ENCODE measurements at regions of chr22 and their contacts with region 1.

Region 1: GRCh38 chr22:39434243-39434653 is 22.6 kb upstream of the MGAT3 start:
- DNase-seq: no peak
- ATAC-seq: no peak
- H3K4me3 Mint-ChIP-seq: no peak overlapping the region
- H3K27ac Mint-ChIP-seq: no peak overlapping the region
- H3K4me1 Mint-ChIP-seq: peaks cover 22% of the 10 kb centered on the region
- H3K27me3 Mint-ChIP-seq: no peaks in the 10 kb centered on the region
- CTCF ChIP-seq: no peak

Region 2: DNA sequence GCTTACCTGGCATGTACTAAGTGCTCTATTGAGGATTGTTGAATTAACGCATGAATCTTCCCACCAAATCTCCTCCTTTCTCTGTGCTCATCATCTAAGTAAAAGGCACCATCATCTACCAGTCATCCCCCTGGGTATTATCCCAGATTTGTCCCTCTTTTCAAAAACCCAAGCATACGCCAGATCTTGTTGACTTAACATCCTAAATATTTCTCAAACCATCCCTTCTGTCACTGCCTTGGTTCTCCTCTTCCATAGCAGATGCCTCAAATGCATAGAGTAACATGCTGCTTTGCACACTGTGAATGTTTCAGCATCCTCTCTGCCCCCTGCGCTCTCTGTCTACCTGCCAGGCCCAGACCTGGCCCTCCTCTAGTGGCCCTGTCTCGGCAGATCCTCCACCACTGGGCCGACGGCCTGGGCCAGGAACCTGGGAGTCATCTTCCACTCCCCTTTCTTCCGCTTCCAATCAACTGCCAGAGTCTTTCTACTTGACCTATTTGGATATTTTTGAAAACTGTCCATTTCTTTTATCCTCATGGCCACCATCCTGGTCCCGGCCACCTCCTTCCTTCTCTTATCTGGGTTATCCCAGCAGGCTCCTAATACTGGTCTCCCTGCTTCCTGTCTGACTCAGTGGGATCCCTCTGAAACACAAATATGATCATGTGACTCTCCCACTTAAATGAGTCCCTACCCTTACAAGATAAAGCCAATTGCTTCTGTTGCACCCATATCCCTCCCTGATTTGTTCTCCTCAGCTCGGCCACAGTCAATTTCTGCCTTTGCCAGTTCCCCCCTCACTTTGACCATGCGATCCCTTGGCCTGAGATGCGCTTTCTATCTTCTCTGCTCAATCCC is 38.1 kb before region 1 on chr22:
- CTCF ChIA-PET with region 1: interaction called, 33 read pairs
- POLR2A ChIA-PET with region 1: no interaction called
- DNase-seq: no peak
- ATAC-seq: no peak
- H3K4me3 Mint-ChIP-seq: no peak overlapping the region
- H3K27ac Mint-ChIP-seq: no peak overlapping the region
- H3K4me1 Mint-ChIP-seq: peaks cover 7% of the 10 kb centered on the region
- H3K27me3 Mint-ChIP-seq: peaks cover 2% of the 10 kb centered on the region; the same call in 1 of the 2 replicates
- CTCF ChIP-seq: no peak

Region 3: DNA sequence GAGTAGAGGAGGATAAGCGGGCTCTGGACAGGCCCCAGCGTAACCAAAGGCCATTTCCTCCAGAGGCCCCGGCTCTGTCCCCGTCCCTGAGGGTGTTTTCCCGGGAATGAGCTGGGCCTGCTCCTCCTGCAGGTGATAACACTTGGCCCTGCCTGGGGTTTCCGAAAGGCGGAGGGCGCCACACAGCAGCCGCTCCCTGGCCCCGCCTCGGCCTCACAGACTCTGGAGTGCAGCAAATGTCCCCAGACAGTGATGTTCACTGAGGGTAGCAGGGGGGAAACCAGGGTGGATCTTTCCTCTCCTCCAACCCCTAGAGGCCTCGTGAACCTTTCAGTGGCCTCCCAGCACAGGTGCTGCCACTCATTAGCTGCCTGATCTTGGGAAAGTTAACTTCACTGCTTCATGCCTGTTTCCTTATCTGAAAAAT is 12.1 kb after region 1 on chr22:
- CTCF ChIA-PET with region 1: interaction called, 21 read pairs
- POLR2A ChIA-PET with region 1: no interaction called
- DNase-seq: peak; percentile 64
- ATAC-seq: peak; percentile 86
- H3K4me3 Mint-ChIP-seq: no peak overlapping the region
- H3K27ac Mint-ChIP-seq: no peak overlapping the region; the same call in 1 of the 2 replicates
- H3K4me1 Mint-ChIP-seq: peaks cover 24% of the 10 kb centered on the region
- H3K27me3 Mint-ChIP-seq: peaks cover 3% of the 10 kb centered on the region
- CTCF ChIP-seq: no peak

Region 4: DNA sequence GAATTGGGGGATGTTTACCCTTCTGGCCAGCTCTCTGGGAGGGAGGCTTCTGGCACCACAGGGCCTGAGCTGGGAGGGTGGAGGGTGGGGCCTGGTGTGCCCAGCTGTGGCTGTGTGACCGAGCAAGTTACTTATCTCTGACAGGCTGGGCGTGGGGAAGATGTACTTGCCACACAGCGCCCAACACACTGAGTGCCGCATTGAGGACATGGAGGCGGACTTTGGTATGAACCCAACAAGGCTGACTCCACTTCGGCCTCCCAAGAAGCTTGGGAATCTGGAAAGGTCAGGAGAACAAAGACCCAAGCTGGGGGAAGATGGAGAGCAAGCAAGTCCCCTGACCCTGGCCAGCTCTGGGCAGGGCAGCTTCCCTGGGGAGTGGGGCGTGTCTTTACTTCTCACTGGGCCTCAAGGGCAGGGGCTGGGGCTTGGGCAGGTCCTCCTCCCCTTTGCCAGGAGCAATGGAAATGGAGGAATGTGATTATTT is 20.2 kb after region 1 on chr22:
- CTCF ChIA-PET with region 1: interaction called, 21 read pairs
- POLR2A ChIA-PET with region 1: no interaction called
- DNase-seq: no peak
- ATAC-seq: peak; percentile 16
- H3K4me3 Mint-ChIP-seq: peak overlapping the region; percentile 17; the same call in 1 of the 2 replicates
- H3K27ac Mint-ChIP-seq: no peak overlapping the region; the same call in 1 of the 2 replicates
- H3K4me1 Mint-ChIP-seq: peaks cover 39% of the 10 kb centered on the region
- H3K27me3 Mint-ChIP-seq: peaks cover 47% of the 10 kb centered on the region
- CTCF ChIP-seq: no peak

Region 5: GRCh38 chr22:39471381-39472141 is 37.3 kb after region 1 on chr22:
- CTCF ChIA-PET with region 1: interaction called, 10 read pairs
- POLR2A ChIA-PET with region 1: no interaction called
- DNase-seq: no peak
- ATAC-seq: peak; percentile 14
- H3K4me3 Mint-ChIP-seq: no peak overlapping the region
- H3K27ac Mint-ChIP-seq: peak overlapping the region; percentile 85
- H3K4me1 Mint-ChIP-seq: peaks cover 68% of the 10 kb centered on the region
- H3K27me3 Mint-ChIP-seq: no peaks in the 10 kb centered on the region
- CTCF ChIP-seq: no peak

Region 6: GRCh38 chr22:39502789-39503409 is 68.7 kb after region 1 on chr22:
- CTCF ChIA-PET with region 1: no interaction called
- POLR2A ChIA-PET with region 1: no interaction called
- DNase-seq: no peak
- ATAC-seq: no peak
- H3K4me3 Mint-ChIP-seq: peak overlapping the region; percentile 97
- H3K27ac Mint-ChIP-seq: no peak overlapping the region
- H3K4me1 Mint-ChIP-seq: peaks cover 13% of the 10 kb centered on the region
- H3K27me3 Mint-ChIP-seq: peaks cover 89% of the 10 kb centered on the region
- CTCF ChIP-seq: no peak

Region 7: GRCh38 chr22:39661842-39662676 is 227.8 kb after region 1 on chr22:
- CTCF ChIA-PET with region 1: no interaction called
- POLR2A ChIA-PET with region 1: no interaction called
- DNase-seq: peak; percentile 96
- ATAC-seq: peak; percentile 72
- H3K4me3 Mint-ChIP-seq: peak overlapping the region; percentile 71
- H3K27ac Mint-ChIP-seq: no peak overlapping the region
- H3K4me1 Mint-ChIP-seq: peaks cover 32% of the 10 kb centered on the region
- H3K27me3 Mint-ChIP-seq: peaks cover 35% of the 10 kb centered on the region
- CTCF ChIP-seq: no peak

Measured in WTC11 (cell line).